Thyroid gland (tissue), 4 donors: ENCODE measurements at regions of chr1 and their contacts with region 1.

Region 1: DNA sequence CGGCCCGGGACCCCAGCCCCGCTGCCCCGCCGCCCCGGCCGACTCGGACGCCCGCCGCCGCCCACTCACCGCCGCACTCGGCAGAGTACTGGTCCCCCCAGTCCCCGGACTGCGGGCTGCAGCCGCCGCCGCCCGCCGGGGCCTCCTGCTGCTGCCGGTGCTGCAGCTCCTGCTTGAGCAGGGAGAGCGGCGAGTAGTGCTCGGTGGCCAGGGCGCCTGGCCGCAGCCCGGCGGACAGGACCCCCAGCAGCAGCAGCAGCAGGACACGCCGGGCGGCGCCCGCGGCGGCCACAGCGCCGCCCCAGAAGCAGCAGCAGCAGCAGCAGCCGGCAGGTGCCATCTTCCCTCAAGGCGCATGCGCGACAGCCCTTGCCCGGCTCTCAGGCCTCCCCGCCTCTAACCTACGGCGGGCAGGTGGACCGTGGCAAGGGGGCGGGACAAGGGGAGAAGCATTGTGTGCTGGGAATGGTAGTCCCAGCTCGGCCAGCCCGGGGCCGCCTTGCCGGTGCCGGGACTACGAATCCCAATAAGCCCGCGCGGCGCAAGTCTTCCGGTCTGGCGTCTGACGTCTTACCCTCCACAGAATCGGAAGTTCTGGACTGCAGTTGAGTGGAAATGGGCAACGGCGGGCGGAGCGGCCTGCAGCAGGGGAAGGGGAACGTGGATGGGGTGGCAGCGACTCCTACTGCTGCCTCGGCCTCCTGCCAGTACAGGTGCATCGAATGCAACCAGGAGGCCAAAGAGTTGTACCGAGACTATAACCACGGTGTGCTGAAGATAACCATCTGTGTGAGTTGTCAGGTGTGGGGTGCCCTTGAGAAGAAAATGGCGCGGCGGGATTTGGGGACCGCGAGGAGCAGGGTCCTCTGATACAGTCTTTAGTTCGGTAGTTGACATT is at the starts of genes ARV1 and TTC13:
- DNase-seq: peak; percentile 100
- H3K4me3 ChIP-seq: peak within 1 kb of the TSS; percentile 69 to 87 (median 70)
- H3K27ac ChIP-seq: peak within 1 kb of the TSS in 2 of 3 donors; percentile 35 to 56
- H3K4me1 ChIP-seq: peaks cover 10 to 16% of the 10 kb centered on the region in 2 donors
- H3K27me3 ChIP-seq: no peaks in the 10 kb centered on the region
- CTCF ChIP-seq: peak in 4 of 6 experiments; percentile 27 to 48 (median 34)
- POLR2A ChIP-seq: peak; percentile 33 to 89
- total RNA-seq, gene ARV1: 29.3 to 39.2 (median 34.8) TPM
- total RNA-seq, gene TTC13: 14.4 to 28.5 (median 26.1) TPM

Region 2: DNA sequence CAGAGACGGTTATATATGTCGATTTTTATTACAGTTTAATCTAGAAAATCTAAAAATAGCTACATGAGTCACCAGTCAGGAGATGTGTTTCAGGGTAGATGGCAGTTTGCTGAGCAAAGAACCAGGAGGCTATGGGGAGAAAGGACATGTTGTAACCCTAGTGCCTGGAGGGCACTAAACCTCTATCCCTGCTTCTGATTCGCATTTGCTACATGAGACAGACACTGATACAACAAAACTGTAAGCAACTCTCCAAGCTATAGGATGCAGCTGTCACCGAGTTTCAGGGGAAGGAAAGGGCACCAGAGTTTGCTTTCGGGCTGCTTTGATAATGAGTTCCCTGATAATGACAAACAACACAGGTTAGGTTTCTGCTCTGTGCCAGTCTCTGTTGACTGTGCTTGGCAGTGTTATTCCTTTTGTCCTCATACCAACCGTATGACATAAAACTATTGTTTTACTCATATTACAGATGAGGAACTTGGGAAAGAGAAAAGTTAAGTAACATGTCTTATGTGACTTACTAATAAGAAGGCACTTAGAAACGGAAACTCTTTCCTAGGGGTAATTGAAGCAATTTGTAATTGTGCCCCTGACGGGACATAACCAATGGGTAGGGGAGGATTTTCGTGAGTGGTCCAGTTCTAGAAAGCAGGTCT is 153.5 kb before region 1 on chr1:
- intact Hi-C with region 1: no loop called
- DNase-seq: no peak
- H3K4me3 ChIP-seq: no peak overlapping the region
- H3K27ac ChIP-seq: peak overlapping the region in 2 of 3 donors; percentile 3 to 56
- H3K4me1 ChIP-seq: peaks cover 9 to 48% of the 10 kb centered on the region in 2 donors
- H3K27me3 ChIP-seq: no peaks in the 10 kb centered on the region
- CTCF ChIP-seq: no peak
- POLR2A ChIP-seq: no peak

Region 3: GRCh38 chr1:231040019-231040799 is 61.5 kb after region 1 on chr1 and contains the start of gene FAM89A:
- intact Hi-C with region 1: loop called (anchors 10 kb)
- DNase-seq: peak; percentile 57 to 59
- H3K4me3 ChIP-seq: peak within 1 kb of the TSS; percentile 62 to 83 (median 81)
- H3K27ac ChIP-seq: peak within 1 kb of the TSS in 2 of 3 donors; percentile 36 to 61
- H3K4me1 ChIP-seq: peaks cover 7 to 16% of the 10 kb centered on the region in 2 donors
- H3K27me3 ChIP-seq: no peaks in the 10 kb centered on the region
- CTCF ChIP-seq: no peak
- POLR2A ChIP-seq: peak in 1 of 2 donors; percentile 35
- total RNA-seq, gene FAM89A: 8.0 to 27.0 (median 17.1) TPM

Region 4: DNA sequence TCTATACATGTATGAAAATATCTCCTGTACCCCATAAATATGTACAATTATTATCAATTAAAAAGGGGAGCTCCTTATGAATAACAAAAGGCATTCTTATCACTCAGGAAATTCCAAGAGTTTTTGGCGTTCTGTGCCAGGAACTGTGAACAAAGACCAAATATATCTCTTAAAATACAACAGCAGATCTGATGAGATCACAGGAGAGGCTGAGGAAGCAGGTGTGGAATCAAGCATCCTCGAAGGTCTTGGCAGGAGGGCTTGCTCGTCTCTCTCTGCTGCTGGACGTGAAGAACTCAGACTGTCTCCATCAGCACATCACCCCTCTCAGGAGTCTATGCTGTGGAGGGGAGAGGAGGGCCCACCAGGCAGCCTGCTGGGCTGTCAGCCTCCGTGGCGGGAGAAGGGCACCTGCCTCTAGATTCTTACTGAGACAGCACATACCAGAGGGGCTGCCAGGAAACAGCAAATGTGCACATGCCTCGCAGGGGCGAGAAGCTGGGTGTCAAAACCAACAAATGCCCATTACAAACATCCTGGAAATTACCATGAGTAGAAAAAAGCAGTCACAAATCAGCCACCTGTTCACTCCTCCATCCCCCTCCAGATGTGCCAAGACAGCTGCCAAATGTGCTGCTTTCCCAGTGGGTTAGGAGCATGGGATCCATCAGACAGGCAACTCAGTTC is 92.2 kb after region 1 on chr1:
- intact Hi-C with region 1: no loop called
- DNase-seq: no peak
- H3K4me3 ChIP-seq: no peak overlapping the region
- H3K27ac ChIP-seq: no peak overlapping the region
- H3K4me1 ChIP-seq: no peaks in the 10 kb centered on the region
- H3K27me3 ChIP-seq: no peaks in the 10 kb centered on the region
- CTCF ChIP-seq: no peak
- POLR2A ChIP-seq: no peak